ENCODE measurements at regions of chr22 and their contacts with region 1.

Region 1: DNA sequence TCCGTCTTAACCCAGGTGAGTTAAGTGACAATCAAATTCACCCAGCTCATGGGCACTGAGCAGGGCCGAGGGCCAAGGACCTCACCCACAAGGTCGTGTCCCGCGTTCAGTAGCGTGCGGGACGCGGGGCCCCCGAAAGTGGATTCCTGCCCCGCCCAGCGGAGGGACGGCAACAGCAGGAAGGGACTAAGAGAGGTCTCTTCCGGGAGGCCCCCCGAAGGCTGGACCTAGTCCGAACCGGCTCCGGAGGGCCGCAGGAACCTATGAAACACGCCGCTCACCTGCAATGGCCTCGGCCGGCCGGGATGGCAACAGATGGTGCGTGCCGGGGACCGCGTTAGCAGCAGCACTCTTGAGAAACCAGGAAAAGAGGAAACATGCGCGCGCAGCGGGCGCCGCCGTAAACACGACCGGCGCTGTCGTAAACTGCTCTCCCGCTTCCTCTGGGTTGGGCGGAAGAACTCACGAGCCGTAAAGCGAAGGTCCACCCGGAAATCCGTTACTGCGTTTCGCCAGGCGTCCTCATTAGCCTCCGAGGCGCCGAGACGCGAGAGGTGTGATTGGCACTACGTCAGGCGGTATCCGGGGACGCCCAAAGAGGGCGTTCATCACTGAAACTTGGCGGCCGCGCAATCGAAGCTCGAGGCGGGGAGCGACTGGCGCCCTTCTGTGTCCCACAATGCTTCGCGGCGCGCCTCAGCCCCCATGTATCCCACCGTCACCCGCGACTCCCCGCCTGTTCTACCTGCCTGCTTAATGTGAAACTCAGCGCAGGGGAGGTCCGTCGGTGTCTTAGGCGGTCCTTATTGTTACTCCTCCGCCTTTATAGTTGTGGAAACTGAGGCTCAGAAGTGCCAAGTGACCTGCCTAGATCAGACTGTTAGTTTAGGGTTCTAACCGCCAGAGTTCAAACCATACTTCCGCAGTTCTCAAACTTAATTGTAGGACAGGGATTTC is at the start of gene EIF3D:
- DNase-seq: peak; percentile 99
- ATAC-seq: peak; percentile 96
- H3K4me3 Mint-ChIP-seq: peak within 1 kb of the TSS; percentile 82
- H3K27ac Mint-ChIP-seq: peak within 1 kb of the TSS; percentile 99
- H3K4me1 Mint-ChIP-seq: peaks cover 25% of the 10 kb centered on the region
- H3K27me3 Mint-ChIP-seq: no peaks in the 10 kb centered on the region
- total RNA-seq, gene EIF3D: 359 to 403 TPM

Region 2: GRCh38 chr22:36028646-36029405 is 500.2 kb before region 1 on chr22 and contains the start of gene RBFOX2:
- CTCF ChIA-PET with region 1: no interaction called
- POLR2A ChIA-PET with region 1: interaction called, 3 read pairs
- intact Hi-C with region 1: loop called in 1 of 2 experiments (anchors 2 kb)
- DNase-seq: peak; percentile 87
- ATAC-seq: peak; percentile 83
- H3K4me3 Mint-ChIP-seq: peak within 1 kb of the TSS; percentile 80
- H3K27ac Mint-ChIP-seq: peak within 1 kb of the TSS; percentile 72
- H3K4me1 Mint-ChIP-seq: peaks cover 20% of the 10 kb centered on the region
- H3K27me3 Mint-ChIP-seq: peaks cover 2% of the 10 kb centered on the region
- total RNA-seq, gene RBFOX2: 6.9 to 7.7 TPM

Region 3: DNA sequence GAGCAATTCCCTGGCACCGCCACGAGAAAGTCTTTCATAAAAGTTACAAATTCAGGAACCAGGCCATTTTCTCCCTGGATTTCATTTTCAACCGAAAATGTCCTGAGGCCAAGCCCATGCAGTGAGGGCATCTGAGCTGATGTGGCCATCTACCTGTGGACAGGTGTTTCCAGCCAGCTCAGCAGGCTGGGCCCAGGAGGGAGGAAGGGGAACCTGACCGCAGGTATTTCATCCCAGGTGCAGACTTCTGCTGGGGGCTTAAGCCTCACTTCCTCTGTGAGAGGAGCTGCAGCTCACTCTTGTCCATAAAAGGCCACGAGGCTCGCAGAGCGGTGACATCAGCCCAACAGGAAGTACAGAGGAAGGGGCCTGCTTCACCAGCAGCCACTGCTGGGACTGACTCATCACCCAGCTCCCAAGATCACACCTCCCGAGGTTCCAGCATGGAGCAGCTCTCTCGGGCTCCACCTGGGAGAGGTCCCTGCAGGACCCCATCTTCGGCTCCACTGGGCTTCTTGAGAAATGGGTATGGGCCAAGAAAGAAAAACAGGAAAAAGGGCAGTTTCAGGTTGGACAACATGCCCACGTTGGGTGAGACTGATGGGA is 197.7 kb before region 1 on chr22:
- CTCF ChIA-PET with region 1: no interaction called
- POLR2A ChIA-PET with region 1: interaction called, 4 read pairs
- intact Hi-C with region 1: loop called in 1 of 2 experiments (anchors 2 kb)
- DNase-seq: peak; percentile 88
- ATAC-seq: peak; percentile 51
- H3K4me3 Mint-ChIP-seq: peak overlapping the region; percentile 77
- H3K27ac Mint-ChIP-seq: peak overlapping the region; percentile 99
- H3K4me1 Mint-ChIP-seq: peaks cover 95% of the 10 kb centered on the region
- H3K27me3 Mint-ChIP-seq: no peaks in the 10 kb centered on the region

Region 4: GRCh38 chr22:36454916-36455570 is 74.0 kb before region 1 on chr22:
- CTCF ChIA-PET with region 1: no interaction called
- POLR2A ChIA-PET with region 1: no interaction called
- intact Hi-C with region 1: loop called (anchors 1 to 2 kb)
- DNase-seq: peak; percentile 98
- ATAC-seq: peak; percentile 82
- H3K4me3 Mint-ChIP-seq: peak overlapping the region; percentile 71
- H3K27ac Mint-ChIP-seq: peak overlapping the region; percentile 67
- H3K4me1 Mint-ChIP-seq: peaks cover 44% of the 10 kb centered on the region
- H3K27me3 Mint-ChIP-seq: no peaks in the 10 kb centered on the region

Region 5: DNA sequence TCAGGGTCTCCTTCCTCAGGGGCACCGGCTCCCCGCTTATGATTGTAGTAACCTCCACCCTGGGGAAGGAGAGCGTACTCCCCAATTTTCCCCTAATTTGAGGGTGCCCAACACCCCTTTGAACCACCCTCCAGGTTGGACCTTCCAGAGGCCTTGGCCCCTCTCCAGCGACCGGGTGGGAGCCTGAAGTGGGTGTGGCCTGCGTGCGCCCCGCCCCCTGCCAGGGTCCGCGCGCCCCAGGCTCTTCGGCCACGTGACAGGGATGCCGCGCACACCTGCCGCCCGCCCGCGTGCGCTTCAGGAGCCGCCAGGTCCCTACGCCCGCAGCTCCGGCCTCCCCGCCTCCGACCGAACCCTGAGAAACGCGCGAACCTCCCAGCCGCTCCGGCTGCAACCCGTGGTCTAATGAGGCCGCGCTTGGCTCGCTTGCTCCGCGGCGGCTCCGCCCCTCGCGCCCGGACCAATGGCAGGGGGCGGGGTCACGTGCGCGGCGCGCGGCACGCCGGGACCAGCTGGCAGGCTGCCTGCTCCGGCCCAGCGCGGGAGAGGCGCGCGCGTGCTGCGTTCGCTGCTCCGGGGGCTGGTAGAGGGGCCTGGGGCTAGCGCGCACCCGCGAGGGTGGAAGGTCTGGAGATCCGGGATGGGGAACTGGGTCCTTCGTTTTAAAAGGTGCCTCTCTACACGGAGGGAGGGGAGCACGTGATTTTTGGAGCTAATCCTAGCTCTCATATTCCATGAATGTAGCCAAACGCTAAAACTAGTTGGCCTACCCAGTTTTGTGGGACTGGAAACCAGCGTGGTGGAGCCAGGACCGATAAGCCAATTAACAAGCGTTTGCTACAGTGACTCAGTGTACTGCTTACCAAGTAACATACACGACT is 22.2 kb before region 1 on chr22 and contains the start of gene FOXRED2:
- CTCF ChIA-PET with region 1: interaction called, 29 read pairs
- POLR2A ChIA-PET with region 1: interaction called, 8 read pairs
- intact Hi-C with region 1: loop called (anchors 1 kb)
- DNase-seq: peak; percentile 94
- ATAC-seq: peak; percentile 95
- H3K4me3 Mint-ChIP-seq: peak within 1 kb of the TSS; percentile 49
- H3K27ac Mint-ChIP-seq: peak within 1 kb of the TSS; percentile 58
- H3K4me1 Mint-ChIP-seq: peaks cover 13% of the 10 kb centered on the region
- H3K27me3 Mint-ChIP-seq: no peaks in the 10 kb centered on the region
- total RNA-seq, gene FOXRED2: 15.7 to 16.6 TPM

Region 6: GRCh38 chr22:36775964-36776669 is 247.0 kb after region 1 on chr22 and contains the start of gene IFT27:
- CTCF ChIA-PET with region 1: interaction called, 3 read pairs
- POLR2A ChIA-PET with region 1: interaction called, 17 read pairs
- intact Hi-C with region 1: loop called (anchors 1 kb)
- DNase-seq: peak; percentile 98
- ATAC-seq: peak; percentile 97
- H3K4me3 Mint-ChIP-seq: peak within 1 kb of the TSS; percentile 84
- H3K27ac Mint-ChIP-seq: peak within 1 kb of the TSS; percentile 92
- H3K4me1 Mint-ChIP-seq: peaks cover 26% of the 10 kb centered on the region
- H3K27me3 Mint-ChIP-seq: no peaks in the 10 kb centered on the region
- total RNA-seq, gene IFT27: 14.9 to 21.6 TPM

Region 7: DNA sequence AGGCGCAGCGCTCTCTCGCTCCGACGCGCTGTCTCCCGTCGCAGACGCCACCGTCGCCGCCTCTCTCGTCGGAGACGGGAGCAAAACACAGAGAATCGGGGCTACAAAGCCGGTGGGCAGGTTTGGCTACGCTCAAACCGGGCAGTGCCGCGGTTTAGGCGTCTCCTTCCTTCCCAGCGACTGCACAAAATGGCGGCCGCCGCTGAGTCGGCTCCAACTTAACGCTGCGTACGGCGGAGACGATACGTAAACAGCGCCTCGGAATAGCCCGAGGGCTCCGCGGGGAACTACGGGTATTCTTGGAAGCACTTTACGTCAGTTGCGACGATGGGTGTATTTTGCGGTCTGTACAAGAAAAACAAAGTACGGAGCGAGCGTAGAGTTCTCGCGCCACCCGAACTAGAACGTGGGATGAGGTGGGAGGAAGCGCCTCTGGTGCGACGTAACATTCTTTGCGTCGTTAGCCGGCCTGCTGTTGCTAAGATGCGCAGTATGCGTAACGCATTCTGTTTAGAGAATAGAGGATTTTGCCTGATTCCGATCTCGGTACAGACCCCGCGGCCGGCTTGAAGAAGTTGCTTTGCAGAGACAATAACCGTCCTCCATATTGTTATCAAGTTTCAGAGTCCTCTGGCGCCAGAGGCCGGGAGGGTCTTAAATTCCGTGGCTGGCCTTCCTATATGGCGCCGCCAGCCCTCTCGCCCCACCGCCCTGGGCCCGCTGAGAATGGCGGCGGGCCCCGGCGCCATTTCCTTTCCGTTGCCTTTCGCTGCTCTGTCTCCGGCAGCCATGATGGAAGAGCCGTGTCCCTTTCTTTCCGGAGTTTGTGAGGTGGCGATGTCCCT is 1977.3 kb after region 1 on chr22 and contains the start of gene DDX17:
- CTCF ChIA-PET with region 1: no interaction called
- POLR2A ChIA-PET with region 1: no interaction called
- intact Hi-C with region 1: loop called in 1 of 2 experiments (anchors 2 kb)
- DNase-seq: peak; percentile 95
- ATAC-seq: peak; percentile 89
- H3K4me3 Mint-ChIP-seq: peak within 1 kb of the TSS; percentile 89
- H3K27ac Mint-ChIP-seq: peak within 1 kb of the TSS; percentile 100
- H3K4me1 Mint-ChIP-seq: peaks cover 36% of the 10 kb centered on the region
- H3K27me3 Mint-ChIP-seq: no peaks in the 10 kb centered on the region
- total RNA-seq, gene DDX17: 259 to 328 TPM